Uterus (tissue), 4 donors: ENCODE measurements at regions of chr12 and their contacts with region 1.

Region 1: GRCh38 chr12:4112734-4113325 is 160.7 kb upstream of the CCND2 start:
- DNase-seq: no peak
- H3K4me3 ChIP-seq: no peak overlapping the region
- H3K27ac ChIP-seq: no peak overlapping the region
- H3K4me1 ChIP-seq: no peaks in the 10 kb centered on the region
- H3K27me3 ChIP-seq: no peaks in the 10 kb centered on the region
- CTCF ChIP-seq: no peak
- POLR2A ChIP-seq: no peak

Region 2: DNA sequence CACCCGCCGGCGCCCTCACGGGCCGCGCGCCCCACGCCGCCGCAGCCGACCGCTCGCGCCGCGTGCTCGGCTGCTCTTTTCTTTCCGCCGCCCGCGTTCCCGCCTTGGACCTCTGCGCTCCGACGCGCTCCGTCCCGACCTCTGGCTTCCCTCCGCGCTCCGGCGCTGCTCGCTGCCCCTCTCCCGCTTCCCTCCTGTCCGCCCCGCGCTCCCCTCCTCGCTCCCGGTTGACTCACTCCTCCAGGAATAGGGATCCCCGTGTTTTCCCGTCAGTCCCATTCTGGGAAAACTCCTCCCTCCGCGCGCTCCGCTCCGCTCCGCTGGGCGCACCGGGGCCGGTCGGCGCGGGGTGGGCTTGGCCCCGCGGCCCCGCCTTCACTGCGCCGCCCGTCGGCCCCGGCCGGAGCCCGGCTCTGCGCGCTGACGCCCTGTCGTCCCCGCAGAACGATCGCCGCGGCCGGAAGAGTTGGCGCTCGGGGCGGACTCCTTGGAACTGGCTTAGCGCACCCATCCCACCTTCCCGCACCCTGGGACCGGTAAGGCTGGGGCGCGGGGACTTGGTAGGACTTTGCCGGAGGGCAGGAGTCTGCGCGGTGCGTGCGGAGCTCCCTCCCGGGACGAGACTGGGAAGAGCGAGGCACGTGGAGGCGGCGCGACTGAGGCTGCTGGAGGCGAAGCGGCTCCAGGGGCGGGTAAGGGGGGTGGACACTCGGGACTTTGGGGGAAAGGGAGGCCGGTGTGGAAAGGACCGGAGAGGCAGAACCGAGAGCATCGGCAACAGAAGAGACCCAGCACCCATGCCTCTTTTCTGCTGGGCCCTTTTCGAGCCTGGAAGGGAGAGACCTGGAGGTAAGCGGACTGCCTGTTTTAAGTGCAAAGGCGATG is 1153.1 kb before region 1 on chr12:
- intact Hi-C with region 1: loop called (anchors 5 kb)
- DNase-seq: peak; percentile 61 to 67
- H3K4me3 ChIP-seq: peak overlapping the region; percentile 66 to 75
- H3K27ac ChIP-seq: peak overlapping the region; percentile 82 to 87
- H3K4me1 ChIP-seq: no peaks in the 10 kb centered on the region
- H3K27me3 ChIP-seq: no peaks in the 10 kb centered on the region
- CTCF ChIP-seq: peak in 2 of 4 experiments; percentile 4
- POLR2A ChIP-seq: peak in 1 of 2 donors; percentile 36

Region 3: DNA sequence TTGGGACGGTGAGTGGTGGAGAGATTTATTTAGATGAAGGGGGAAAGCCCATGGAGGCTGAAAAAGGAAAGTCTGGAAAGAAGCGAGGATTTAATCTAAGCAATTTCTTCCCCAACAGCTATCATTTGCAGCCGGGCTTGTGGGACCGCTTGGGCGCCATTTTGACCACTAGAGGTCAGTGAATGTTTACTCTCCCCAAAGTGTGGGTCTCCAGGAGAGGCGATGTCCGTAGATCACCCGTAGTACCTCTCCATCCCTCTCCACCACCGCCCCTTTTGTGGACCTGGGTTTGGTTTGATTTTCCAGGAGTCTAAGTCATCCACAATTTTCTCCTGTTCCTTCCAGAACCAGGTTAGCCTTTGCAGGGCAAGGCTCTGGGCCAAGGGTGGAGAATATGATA is 148.4 kb before region 1 on chr12:
- intact Hi-C with region 1: no loop called
- DNase-seq: no peak
- H3K4me3 ChIP-seq: no peak overlapping the region
- H3K27ac ChIP-seq: no peak overlapping the region
- H3K4me1 ChIP-seq: no peaks in the 10 kb centered on the region
- H3K27me3 ChIP-seq: no peaks in the 10 kb centered on the region
- CTCF ChIP-seq: peak in 1 of 4 experiments; percentile 8
- POLR2A ChIP-seq: no peak